A673 (cell line): ENCODE measurements at regions of chr7 and their contacts with region 1.

Region 1: GRCh38 chr7:6186593-6186992 is 85.8 kb downstream of the CYTH3 start:
- DNase-seq: no peak
- H3K4me3 ChIP-seq: no peak overlapping the region
- H3K27ac ChIP-seq: no peak overlapping the region
- H3K4me1 ChIP-seq: no peaks in the 10 kb centered on the region
- H3K27me3 ChIP-seq: no peaks in the 10 kb centered on the region
- CTCF ChIP-seq: no peak

Region 2: DNA sequence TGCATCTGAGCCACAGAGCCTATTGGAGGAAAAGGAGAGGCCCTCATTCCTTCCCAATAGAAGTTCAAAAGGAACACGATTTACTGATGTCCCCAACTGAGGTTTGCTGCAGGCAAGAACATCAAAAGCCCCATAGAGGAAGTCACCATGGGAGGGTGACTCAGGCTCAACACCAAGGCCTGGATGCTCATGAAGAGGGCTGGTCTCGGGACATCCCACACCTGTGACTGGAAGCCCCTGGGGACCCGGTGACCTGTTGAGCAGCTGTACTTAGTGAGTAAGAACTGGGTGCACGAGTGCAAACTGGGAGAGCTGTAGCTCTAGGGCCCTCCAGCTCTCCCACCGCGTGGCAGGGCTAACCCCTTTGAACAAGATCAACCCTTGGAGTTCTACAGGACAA is 47.8 kb after region 1 on chr7:
- CTCF ChIA-PET with region 1: no interaction called
- POLR2A ChIA-PET with region 1: no interaction called
- intact Hi-C with region 1: loop called (anchors 1 kb)
- DNase-seq: no peak
- H3K4me3 ChIP-seq: no peak overlapping the region
- H3K27ac ChIP-seq: no peak overlapping the region
- H3K4me1 ChIP-seq: peaks cover 21% of the 10 kb centered on the region
- H3K27me3 ChIP-seq: no peaks in the 10 kb centered on the region
- CTCF ChIP-seq: no peak

Region 3: GRCh38 chr7:6934986-6935385 is 748.4 kb after region 1 on chr7:
- CTCF ChIA-PET with region 1: no interaction called
- POLR2A ChIA-PET with region 1: no interaction called
- intact Hi-C with region 1: no loop called
- DNase-seq: no peak
- H3K4me3 ChIP-seq: no peak overlapping the region
- H3K27ac ChIP-seq: no peak overlapping the region
- H3K4me1 ChIP-seq: no peaks in the 10 kb centered on the region
- H3K27me3 ChIP-seq: no peaks in the 10 kb centered on the region
- CTCF ChIP-seq: no peak